Panc1 (cell line): ENCODE measurements at regions of chr18 and their contacts with region 1.

Region 1: DNA sequence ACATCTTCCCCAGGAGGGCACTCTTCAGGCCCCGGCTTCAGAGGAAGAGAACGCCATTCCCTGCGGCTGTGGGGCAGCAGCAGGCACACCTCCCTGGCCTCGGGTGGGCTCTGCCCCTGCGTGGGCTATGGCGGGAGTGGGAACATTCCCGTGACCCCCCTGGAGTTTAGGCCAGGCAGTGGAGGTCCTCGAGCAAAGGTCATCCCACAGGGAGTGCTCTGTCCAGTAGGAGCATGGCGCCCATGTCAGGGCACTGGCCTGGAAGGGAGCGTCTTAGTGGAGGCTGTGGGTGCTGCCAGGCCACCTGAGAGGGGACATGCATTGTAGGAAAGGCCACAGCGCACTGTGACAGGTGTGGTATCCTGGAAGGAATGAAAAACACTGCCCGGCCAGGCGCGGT is 9.2 kb upstream of the NFATC1 start:
- DNase-seq: no peak
- ATAC-seq: no peak
- H3K4me3 ChIP-seq: no peak overlapping the region
- H3K27ac ChIP-seq: no peak overlapping the region
- H3K4me1 ChIP-seq: no peaks in the 10 kb centered on the region
- H3K27me3 ChIP-seq: peaks cover 4% of the 10 kb centered on the region
- CTCF ChIP-seq: no peak

Region 2: GRCh38 chr18:79413901-79414300 is 27.4 kb after region 1 on chr18:
- CTCF ChIA-PET with region 1: interaction called, 7 read pairs
- POLR2A ChIA-PET with region 1: interaction called, 16 read pairs
- in situ Hi-C with region 1: no loop called
- intact Hi-C with region 1: no loop called
- DNase-seq: no peak
- ATAC-seq: no peak
- H3K4me3 ChIP-seq: no peak overlapping the region
- H3K27ac ChIP-seq: no peak overlapping the region
- H3K4me1 ChIP-seq: no peaks in the 10 kb centered on the region
- H3K27me3 ChIP-seq: no peaks in the 10 kb centered on the region
- CTCF ChIP-seq: no peak

Region 3: DNA sequence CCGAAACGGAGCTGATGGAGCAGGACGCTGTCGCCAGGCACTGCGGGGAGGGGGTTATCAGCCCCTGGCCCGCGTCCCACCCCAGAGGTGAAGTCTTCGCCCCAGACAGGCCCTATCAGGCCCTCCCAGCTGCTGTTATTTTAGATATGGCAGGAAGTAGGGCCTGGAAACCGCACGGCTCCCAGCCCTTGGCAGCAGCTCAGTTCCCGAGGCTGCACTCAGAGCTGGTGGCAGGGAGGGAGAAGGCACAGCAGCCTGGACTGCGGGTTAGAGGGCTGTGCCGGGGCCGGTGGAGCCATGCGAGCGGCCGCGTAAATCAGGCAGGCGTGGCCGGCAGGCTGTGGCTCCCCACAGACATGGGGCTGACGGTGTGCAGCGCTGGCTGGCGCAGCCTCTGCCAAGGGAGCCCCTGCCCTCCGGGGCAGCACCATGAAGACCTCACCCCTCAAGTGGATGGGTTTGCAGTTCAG is 120.6 kb after region 1 on chr18:
- CTCF ChIA-PET with region 1: no interaction called
- POLR2A ChIA-PET with region 1: no interaction called
- in situ Hi-C with region 1: no loop called
- intact Hi-C with region 1: no loop called
- DNase-seq: no peak
- ATAC-seq: peak; percentile 64
- H3K4me3 ChIP-seq: no peak overlapping the region
- H3K27ac ChIP-seq: no peak overlapping the region
- H3K4me1 ChIP-seq: no peaks in the 10 kb centered on the region
- H3K27me3 ChIP-seq: no peaks in the 10 kb centered on the region
- CTCF ChIP-seq: no peak

Region 4: DNA sequence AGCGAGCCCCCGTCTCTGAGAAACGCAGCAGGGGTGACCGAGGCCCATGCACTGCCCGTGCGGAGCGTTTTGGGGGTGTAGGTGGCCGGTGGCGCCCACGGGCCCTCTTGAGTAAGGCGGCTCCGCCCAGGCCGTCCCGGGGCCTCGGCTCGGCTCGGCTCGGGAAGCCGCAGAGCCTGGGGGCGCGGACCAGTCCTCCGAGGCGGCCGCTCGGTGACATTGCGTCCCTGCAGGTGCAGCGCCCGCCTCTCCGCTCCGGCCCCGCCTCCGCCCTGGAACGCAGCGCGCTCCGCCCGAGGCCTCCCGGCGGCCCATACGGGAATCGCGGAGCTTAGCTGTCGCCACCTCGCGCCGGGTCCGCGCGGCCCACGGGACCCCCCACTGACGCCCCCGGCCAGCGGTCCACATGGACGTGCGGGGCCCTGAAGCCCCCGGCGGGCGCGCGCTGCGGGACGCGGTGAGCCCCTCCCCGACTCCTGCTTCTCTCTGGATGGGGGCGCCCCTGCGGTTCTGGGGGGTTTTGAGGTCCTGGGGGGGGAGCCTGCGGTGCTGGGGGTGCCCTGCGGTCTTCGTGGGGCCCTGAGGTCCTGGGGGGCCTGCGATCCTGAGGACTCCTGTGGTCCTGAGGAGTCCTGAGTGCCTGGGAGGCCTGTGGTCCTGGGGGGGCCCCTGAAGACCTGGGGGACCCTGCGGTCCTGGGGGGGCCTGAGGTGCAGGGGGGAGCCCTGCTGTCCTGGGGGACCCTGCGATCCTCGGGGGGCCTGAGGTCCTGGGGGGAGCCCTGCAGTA is 578.0 kb after region 1 on chr18 and contains the start of gene HSBP1L1:
- CTCF ChIA-PET with region 1: no interaction called
- POLR2A ChIA-PET with region 1: no interaction called
- in situ Hi-C with region 1: no loop called
- intact Hi-C with region 1: no loop called
- DNase-seq: no peak
- ATAC-seq: peak; percentile 87
- H3K4me3 ChIP-seq: peak within 1 kb of the TSS; percentile 69 to 80
- H3K27ac ChIP-seq: peak within 1 kb of the TSS; percentile 93
- H3K4me1 ChIP-seq: peaks cover 31% of the 10 kb centered on the region
- H3K27me3 ChIP-seq: no peaks in the 10 kb centered on the region
- CTCF ChIP-seq: no peak
- total RNA-seq, gene HSBP1L1: 45.4 TPM